ENCODE measurements at regions of chr1 and their contacts with region 1.

Region 1: DNA sequence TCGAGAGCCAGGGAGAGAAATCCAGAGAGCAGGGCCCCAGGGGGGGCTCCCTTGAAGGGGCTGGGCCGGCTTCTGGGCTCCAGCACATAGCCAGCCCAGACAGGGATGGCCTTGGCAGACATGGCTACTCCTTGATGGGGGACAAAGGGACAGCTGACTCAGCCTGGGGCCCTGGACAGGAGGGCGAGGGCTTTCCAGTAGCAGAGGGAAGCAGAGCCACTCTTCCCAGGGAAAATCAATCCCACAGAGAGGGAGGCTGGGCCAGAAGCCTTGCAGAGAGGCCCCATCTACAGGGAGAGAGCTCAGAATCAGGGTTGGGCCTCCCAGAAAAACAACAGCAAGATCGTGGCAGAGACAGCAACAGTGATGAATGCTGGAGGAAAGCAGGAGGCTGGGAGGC is 15.6 kb downstream of the IGFN1 start:
- DNase-seq: peak in 1 of 2 donors; percentile 53
- H3K4me3 ChIP-seq: no peak overlapping the region
- H3K27ac ChIP-seq: no peak overlapping the region
- H3K4me1 ChIP-seq: no peaks in the 10 kb centered on the region
- H3K27me3 ChIP-seq: no peaks in the 10 kb centered on the region
- CTCF ChIP-seq: no peak
- EP300 ChIP-seq: no peak
- POLR2A ChIP-seq: no peak

Region 2: DNA sequence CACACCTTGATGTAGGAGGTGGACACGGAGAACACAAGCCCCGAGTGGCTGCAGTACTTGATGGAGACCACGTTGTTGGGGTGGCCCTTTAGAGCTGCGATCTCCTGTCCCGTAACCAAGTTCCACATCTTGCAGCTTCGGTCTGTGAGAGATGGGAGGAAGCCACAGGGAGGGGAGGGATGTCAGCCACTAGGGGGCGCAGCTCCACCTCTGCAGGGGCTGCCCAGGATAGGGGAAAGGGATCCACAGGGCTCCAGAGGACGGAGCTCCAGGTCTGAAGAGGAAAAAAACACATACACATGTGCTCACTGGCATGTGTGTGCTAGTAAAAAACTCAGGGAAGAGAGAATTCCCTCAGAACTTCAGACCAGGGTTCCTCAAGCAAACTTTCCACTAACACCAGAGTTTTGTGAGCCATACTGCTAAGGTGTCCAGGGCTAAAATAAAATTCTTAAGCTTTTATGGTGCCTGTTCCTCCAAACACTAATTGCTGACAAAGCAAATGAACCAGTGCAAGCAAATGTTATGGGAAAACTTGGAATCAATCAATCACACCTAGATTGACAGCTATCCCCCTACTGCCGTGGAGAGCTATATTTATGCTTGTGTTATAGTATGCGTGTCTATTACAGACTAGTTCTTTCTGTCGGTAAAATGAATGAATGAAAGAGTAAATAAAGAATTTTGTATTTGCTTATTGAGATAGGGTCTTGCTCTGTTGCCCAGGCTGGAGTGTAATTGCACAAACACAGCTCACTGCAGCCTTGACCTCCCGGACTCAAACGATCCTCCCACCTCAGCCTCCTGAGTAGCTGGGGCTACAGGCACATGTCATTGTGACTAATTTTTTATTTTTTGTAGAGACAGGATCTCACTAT is 226.4 kb before region 1 on chr1:
- intact Hi-C with region 1: loop called (anchors 10 kb)
- DNase-seq: peak in 1 of 2 donors; percentile 39
- H3K4me3 ChIP-seq: no peak overlapping the region
- H3K27ac ChIP-seq: peak overlapping the region in 2 of 5 donors; percentile 24 to 64
- H3K4me1 ChIP-seq: no peaks in the 10 kb centered on the region
- H3K27me3 ChIP-seq: no peaks in the 10 kb centered on the region
- CTCF ChIP-seq: peak in 5 of 7 experiments; percentile 7 to 54 (median 16)
- EP300 ChIP-seq: no peak
- POLR2A ChIP-seq: no peak

Region 3: GRCh38 chr1:201268604-201269151 is 62.5 kb after region 1 on chr1:
- intact Hi-C with region 1: no loop called
- DNase-seq: peak; percentile 57 to 76
- H3K4me3 ChIP-seq: no peak overlapping the region
- H3K27ac ChIP-seq: no peak overlapping the region
- H3K4me1 ChIP-seq: no peaks in the 10 kb centered on the region
- H3K27me3 ChIP-seq: peaks cover 0 to 43% (median 0%) of the 10 kb centered on the region in 3 donors
- CTCF ChIP-seq: no peak
- EP300 ChIP-seq: no peak
- POLR2A ChIP-seq: no peak

Measured in stomach (tissue), 19 donors.